Left cardiac atrium (tissue), 4 donors: ENCODE measurements at regions of chr19 and their contacts with region 1.

Region 1: DNA sequence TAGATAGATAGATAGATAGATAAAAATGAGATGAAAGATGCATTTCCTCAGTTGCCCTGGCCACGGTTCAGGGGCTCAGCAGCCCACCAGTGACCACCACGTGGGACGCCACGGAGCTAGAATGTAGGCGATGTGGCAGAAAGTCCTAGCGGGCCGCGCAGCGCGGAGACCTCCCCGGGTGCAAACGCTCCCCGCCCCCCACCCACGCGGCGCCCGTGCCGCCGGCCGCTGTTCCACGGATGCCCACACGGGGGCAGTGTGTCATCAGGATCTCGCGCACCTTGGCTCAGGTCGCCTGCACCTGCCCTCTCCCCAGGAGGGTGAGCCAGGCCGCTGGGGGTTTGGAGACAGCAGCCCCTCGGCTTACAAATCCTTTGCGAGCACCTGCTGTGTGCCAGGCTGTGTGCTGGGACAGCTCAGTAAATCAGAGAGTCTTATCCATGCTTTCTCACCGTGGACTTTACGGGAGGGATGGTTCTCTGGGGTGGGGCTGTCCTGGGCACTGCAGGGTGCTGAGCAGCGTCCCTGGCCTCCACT is 13.7 kb upstream of the TLE5 start:
- DNase-seq: peak; percentile 68
- ATAC-seq: peak; percentile 75 to 78

Region 2: GRCh38 chr19:2950286-2951124 is 125.5 kb before region 1 on chr19:
- intact Hi-C with region 1: loop called in 1 of 2 experiments (anchors 10 kb)
- DNase-seq: peak; percentile 100
- ATAC-seq: peak; percentile 98

Region 3: GRCh38 chr19:3098515-3099331 is 22.8 kb after region 1 on chr19:
- intact Hi-C with region 1: no loop called
- DNase-seq: peak; percentile 87
- ATAC-seq: peak; percentile 51 to 57

Region 4: DNA sequence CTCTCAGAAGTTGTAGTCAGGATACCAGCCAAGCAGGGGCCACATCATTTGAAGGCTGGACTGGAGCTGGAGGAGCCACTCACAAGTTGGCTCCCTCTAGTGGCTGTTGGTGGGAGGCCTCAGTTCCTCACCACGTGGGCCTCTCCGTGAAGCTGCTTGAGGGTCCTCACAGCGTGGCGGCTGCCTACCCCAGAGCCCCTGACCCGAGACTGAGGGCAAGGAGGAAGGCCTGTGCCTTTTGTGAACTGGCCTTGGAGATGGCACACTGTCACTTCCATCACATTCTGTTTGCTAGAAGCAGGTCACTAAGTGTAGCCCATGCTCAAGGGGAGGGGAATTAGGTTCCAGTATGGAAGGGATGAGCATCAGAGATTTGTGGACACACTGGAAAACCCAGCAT is 32.8 kb after region 1 on chr19:
- intact Hi-C with region 1: loop called in 1 of 2 experiments (anchors 5 kb)
- DNase-seq: peak; percentile 66
- ATAC-seq: peak; percentile 31 to 42

Region 5: GRCh38 chr19:3125900-3126524 is 50.0 kb after region 1 on chr19:
- intact Hi-C with region 1: loop called in 1 of 2 experiments (anchors 5 kb)
- DNase-seq: peak; percentile 67
- ATAC-seq: peak; percentile 60 to 69

Region 6: DNA sequence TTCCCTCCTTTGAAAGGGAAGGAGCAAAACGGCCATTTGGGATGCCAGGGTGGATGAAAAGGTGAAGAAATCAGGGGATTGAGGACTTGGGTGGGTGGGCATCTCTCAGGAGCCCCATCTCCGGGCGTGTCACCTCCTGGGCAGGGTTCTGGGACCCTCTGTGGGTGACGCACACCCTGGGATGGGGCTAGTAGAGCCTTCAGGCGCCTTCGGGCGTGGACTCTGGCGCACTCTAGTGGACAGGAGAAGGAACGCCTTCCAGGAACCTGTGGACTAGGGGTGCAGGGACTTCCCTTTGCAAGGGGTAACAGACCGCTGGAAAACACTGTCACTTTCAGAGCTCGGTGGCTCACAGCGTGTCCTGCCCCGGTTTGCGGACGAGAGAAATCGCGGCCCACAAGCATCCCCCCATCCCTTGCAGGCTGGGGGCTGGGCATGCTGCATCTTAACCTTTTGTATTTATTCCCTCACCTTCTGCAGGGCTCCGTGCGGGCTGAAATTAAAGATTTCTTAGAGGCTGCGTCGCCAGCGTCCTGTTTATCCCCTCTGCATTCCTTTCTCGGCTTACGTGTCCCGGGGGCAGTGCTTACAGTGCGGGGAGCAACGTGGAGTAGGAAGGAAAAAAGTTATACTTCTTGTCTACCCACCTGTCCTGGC is 87.4 kb after region 1 on chr19:
- intact Hi-C with region 1: loop called in 1 of 2 experiments (anchors 10 kb)
- DNase-seq: peak; percentile 62
- ATAC-seq: peak; percentile 89 to 90